ENCODE measurements at regions of chr11 and their contacts with region 1.

Region 1: DNA sequence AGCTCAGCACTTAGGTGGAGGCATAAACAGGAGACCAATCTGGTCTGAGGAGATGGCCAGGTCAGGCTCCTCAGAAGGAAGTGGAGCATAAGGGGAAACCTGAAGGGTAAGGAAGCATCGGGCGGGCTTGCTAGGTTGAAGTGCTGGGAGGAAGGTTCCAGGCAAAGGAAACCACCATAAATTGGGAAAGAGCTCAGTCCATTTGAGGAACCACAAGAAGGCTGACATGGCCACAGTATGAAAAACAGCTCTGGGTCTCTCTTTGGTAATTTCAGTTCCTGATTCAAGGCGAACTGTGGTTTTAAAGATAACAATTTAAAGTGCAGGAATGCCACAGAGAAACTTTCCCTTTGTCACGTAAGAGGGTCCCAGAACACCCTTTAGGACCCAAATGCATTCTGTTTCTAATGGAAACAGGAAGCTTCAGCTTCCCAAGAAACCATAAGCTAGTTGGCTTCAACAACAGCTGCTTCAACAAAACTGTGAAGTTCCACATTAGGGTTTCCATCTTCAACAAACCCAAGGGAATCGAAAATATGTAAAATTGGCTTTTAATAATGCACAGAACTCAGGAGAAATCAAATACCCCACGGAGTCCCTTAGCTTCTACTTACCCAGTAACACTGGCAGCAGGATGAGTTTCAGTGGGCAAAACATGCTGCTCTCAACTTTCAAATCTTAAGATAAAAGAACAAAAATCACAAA is 10.4 kb downstream of the JAML start:
- DNase-seq: peak; percentile 25
- ATAC-seq: peak; percentile 66
- H3K4me3 Mint-ChIP-seq: peak overlapping the region; percentile 60
- H3K27ac Mint-ChIP-seq: peak overlapping the region; percentile 67
- H3K4me1 Mint-ChIP-seq: peaks cover 57% of the 10 kb centered on the region
- H3K27me3 Mint-ChIP-seq: peaks cover 28% of the 10 kb centered on the region
- CTCF ChIP-seq: no peak

Region 2: DNA sequence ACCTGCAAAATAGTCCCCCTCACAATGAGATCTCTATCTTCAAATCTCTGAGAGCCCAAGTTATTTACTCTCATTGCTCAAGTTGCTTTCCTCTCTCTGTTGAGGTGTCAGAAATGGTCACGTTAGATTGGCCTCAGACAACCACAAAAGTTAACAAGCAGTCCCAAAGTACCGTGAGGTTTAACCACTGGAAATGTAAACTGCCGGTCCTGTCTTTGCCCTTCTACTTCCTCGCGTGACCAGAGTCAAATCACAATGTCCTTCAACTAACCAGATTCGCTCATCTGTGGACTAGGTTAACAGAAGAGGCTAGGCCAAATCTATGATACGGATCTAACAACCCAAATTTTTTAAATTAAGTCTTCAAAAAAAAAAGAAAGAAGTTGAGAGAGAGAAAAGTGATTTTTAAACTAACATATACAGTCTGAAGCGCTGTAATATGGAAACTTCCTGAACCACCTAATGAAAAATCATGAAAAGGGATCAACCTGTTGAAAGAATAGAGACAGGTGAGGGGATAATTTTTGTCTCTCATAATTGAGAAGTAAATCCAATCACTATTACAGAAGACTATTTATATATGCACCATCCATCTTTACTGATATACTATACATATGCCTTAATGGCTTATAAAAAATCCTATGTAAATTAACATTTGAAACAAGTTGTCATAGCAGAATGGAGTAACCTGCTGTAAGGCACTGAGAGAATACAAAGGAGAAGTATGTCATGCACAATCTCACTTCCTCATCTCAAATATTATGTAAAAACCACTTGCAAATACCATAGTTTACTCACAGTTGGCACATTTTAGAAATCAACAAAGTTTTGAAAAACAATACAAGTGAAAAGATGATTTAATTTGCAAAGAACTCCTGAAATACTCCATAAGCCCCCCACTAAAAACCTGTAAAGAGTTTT is 13.8 kb after region 1 on chr11:
- CTCF ChIA-PET with region 1: interaction called, 3 read pairs
- POLR2A ChIA-PET with region 1: interaction called, 25 read pairs
- intact Hi-C with region 1: loop called (anchors 1 kb)
- DNase-seq: no peak
- ATAC-seq: peak; percentile 73
- H3K4me3 Mint-ChIP-seq: peak overlapping the region; percentile 63
- H3K27ac Mint-ChIP-seq: peak overlapping the region; percentile 87
- H3K4me1 Mint-ChIP-seq: peaks cover 59% of the 10 kb centered on the region
- H3K27me3 Mint-ChIP-seq: peaks cover 6% of the 10 kb centered on the region
- CTCF ChIP-seq: no peak

Region 3: GRCh38 chr11:118247047-118247446 is 32.7 kb after region 1 on chr11:
- CTCF ChIA-PET with region 1: no interaction called
- POLR2A ChIA-PET with region 1: interaction called, 14 read pairs
- intact Hi-C with region 1: loop called (anchors 2 kb)
- DNase-seq: no peak
- ATAC-seq: no peak
- H3K4me3 Mint-ChIP-seq: no peak overlapping the region
- H3K27ac Mint-ChIP-seq: no peak overlapping the region
- H3K4me1 Mint-ChIP-seq: peaks cover 25% of the 10 kb centered on the region
- H3K27me3 Mint-ChIP-seq: peaks cover 6% of the 10 kb centered on the region
- CTCF ChIP-seq: no peak

Region 4: DNA sequence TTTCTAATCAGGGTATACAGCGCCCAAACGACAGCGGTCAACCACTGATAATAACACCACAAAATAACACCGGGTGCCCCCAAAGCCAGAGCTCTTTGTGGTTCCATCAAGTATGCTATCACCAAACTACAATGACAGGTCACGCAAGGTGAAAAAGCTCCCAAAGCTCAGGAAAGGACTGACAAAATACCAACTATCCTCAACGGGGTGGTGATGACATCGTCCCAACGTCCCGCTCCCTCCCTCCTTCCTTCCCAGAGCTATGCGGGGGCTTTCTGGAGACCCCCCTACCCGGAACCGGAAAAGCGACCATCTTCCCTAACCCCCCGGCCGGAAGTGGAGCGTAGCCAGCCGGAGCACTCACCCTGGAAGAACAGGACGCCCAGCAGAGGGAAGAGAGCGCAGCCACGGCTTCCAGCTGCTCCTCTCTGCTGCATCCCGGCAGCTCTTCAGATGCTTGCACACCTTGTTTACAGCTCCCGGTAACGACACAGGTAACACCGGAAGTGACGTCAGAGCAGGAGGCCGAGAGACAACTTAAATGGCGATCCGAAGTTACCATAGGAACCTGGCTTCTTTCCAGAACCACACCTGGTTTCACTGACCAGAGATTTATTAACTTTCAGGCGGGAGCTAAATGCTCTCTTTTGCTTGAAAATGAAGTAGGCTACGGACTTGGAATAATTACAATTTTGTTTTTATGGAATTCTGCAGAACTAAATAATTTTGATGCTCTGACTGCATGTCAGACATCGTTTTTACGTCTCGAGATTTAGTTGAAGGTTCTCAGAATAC is 37.7 kb after region 1 on chr11 and contains the start of gene MPZL3:
- CTCF ChIA-PET with region 1: no interaction called
- POLR2A ChIA-PET with region 1: interaction called, 14 read pairs
- intact Hi-C with region 1: no loop called
- DNase-seq: peak; percentile 72
- ATAC-seq: peak; percentile 76
- H3K4me3 Mint-ChIP-seq: peak within 1 kb of the TSS; percentile 98
- H3K27ac Mint-ChIP-seq: peak within 1 kb of the TSS; percentile 99
- H3K4me1 Mint-ChIP-seq: peaks cover 17% of the 10 kb centered on the region
- H3K27me3 Mint-ChIP-seq: peaks cover 21% of the 10 kb centered on the region
- CTCF ChIP-seq: no peak
- total RNA-seq, gene MPZL3: 2.9 and 3.7 TPM in 2 replicates

Region 5: DNA sequence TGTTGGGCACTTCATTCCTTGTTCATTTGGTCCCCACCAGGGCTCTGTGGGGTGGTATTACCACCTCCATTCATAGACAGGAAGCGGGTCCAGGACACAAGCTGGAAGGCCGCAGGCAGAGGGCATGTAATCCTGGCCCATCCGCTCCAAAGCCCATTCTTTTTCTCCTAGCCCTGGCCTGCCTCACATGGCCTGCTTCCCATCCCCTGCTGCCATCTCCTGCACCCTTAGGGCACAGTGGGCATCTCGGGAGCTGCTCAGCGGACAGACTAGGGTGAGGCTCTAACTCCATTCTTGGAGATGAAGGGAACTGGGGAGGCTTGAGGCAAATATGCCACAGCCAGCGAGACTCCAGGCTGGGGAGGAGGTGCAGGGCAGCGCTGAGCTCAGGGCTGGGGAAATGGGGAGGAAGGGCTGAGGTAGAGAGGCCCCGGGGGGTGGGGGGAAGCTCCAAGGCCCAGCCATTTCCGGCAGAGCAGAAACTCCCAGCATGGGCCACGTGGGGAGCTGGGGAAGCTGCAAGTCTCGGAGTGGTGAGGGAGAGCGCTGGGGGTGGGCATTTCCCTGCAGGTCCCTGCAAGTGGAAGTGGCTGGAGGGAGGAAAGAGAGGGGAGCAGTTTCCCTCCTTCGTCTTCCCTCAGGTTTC is 725.7 kb after region 1 on chr11:
- CTCF ChIA-PET with region 1: no interaction called
- POLR2A ChIA-PET with region 1: interaction called, 10 read pairs
- intact Hi-C with region 1: no loop called
- DNase-seq: no peak
- ATAC-seq: peak; percentile 58
- H3K4me3 Mint-ChIP-seq: no peak overlapping the region
- H3K27ac Mint-ChIP-seq: no peak overlapping the region
- H3K4me1 Mint-ChIP-seq: peaks cover 22% of the 10 kb centered on the region
- H3K27me3 Mint-ChIP-seq: peaks cover 3% of the 10 kb centered on the region
- CTCF ChIP-seq: no peak

Measured in activated B cell treated with CpG ODN at 0.5 μM for 24 hours (primary cell).